CD14-positive monocyte (primary cell): ENCODE measurements at regions of chr10 and their contacts with region 1.

Region 1: DNA sequence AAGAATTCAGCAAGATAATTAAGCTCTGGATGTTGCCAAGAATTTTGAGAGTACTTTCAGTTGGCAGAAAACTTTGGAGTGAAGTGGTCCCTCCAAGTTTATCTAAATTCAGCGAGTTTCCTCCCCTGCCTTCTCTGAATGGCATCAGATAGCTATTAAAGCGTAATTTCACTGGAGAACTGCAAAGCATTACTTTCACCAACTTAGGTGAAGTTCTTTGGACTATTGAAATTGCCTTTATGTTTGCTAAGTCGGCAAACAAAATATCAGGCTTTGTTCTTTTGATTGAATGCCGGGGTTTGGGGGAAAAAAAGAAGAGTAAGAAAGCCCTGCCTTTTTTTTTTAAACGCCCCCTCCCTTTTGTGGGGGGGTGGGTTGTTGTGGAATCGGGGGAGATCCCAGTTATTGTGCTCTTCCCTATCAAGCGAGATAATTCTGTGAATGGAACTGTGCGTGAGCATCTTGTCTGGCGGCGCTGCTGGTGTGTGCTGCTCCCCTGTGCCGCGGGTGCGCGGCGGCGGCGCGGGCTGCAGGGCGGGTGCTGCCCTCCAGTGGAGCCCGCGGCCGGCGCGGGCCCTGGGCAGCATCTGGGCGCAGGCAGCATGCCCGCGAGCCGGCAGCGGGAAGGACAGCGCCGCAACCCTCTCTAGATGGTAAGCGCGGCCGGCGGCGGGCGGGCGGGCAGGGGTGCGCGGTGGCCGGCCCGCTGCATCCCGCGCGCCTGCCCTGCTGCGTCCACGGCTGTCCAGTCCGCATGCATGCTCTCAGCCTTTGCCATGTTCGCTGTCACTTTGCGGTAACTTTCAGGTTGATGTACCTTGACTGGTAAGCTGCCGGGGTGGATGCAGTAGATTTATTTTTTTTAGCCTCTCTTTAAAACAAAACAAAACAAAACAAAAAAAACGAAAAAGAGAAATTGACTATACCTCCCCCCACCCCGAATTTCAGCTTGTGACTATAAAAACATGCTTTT is 176.5 kb downstream of the TCF7L2 start:
- DNase-seq: peak; percentile 49 to 74 (median 60)
- H3K4me3 ChIP-seq: peak overlapping the region in 1 of 3 experiments; percentile 31
- H3K4me3 Mint-ChIP-seq: peak overlapping the region; percentile 45 to 83
- H3K27ac ChIP-seq: no peak overlapping the region
- H3K27ac Mint-ChIP-seq: peak overlapping the region in 2 of 7 donors; percentile 6 to 55
- H3K4me1 ChIP-seq: peaks cover 5 to 20% of the 10 kb centered on the region in 2 donors
- H3K4me1 Mint-ChIP-seq: peaks cover 17% of the 10 kb centered on the region
- H3K27me3 ChIP-seq: peaks cover 17 to 20% of the 10 kb centered on the region in 2 donors
- H3K27me3 Mint-ChIP-seq: peaks cover 17 to 50% (median 44%) of the 10 kb centered on the region in 3 donors
- CTCF ChIP-seq: peak; percentile 84

Region 2: GRCh38 chr10:112565434-112566053 is 561.0 kb before region 1 on chr10:
- intact Hi-C with region 1: loop called in 1 of 2 experiments (anchors 10 kb)
- DNase-seq: peak; percentile 17 to 35 (median 32)
- H3K4me3 ChIP-seq: no peak overlapping the region
- H3K4me3 Mint-ChIP-seq: no peak overlapping the region
- H3K27ac ChIP-seq: no peak overlapping the region
- H3K27ac Mint-ChIP-seq: no peak overlapping the region
- H3K4me1 ChIP-seq: no peaks in the 10 kb centered on the region
- H3K4me1 Mint-ChIP-seq: no peaks in the 10 kb centered on the region
- H3K27me3 ChIP-seq: no peaks in the 10 kb centered on the region
- H3K27me3 Mint-ChIP-seq: peaks cover 0 to 2% (median 0%) of the 10 kb centered on the region in 3 donors
- CTCF ChIP-seq: peak; percentile 74

Region 3: DNA sequence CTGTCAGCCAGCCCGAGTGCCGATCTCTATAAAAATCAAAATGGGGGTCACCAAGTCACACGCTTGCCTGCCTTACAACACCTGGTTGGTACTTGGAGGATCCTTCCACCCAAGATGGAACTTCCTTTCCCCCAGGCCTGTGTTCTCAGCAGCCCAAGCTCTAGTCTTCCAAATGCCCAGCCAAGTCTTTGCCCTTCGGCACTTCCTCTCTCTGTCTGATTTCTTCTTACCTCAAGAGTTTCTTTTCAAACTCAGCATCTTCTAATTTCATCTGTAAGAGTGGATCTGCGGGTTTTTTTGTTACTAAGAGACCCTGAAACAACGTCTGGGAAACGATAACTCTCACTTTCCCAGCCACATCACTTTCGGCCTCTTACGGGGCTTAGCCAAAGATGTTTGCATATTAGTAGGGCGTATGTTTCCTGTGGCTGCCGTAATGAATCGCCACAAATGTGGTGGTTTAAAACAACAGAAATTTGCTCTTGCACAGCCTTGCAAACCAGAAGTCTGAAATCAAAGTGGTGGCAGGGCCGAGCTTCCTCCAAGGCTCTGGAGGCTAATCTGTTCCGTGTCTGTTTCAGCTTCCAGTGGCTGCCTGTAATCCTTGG is 43.4 kb after region 1 on chr10:
- intact Hi-C with region 1: no loop called
- DNase-seq: peak; percentile 35 to 43 (median 36)
- H3K4me3 ChIP-seq: peak overlapping the region in 1 of 3 experiments; percentile 37
- H3K4me3 Mint-ChIP-seq: peak overlapping the region; percentile 2 to 54
- H3K27ac ChIP-seq: peak overlapping the region; percentile 54 to 73
- H3K27ac Mint-ChIP-seq: peak overlapping the region; percentile 76 to 88 (median 82)
- H3K4me1 ChIP-seq: peaks cover 25 to 33% of the 10 kb centered on the region in 2 donors
- H3K4me1 Mint-ChIP-seq: peaks cover 30% of the 10 kb centered on the region
- H3K27me3 ChIP-seq: no peaks in the 10 kb centered on the region
- H3K27me3 Mint-ChIP-seq: peaks cover 0 to 3% (median 1%) of the 10 kb centered on the region in 3 donors
- CTCF ChIP-seq: no peak

Region 4: DNA sequence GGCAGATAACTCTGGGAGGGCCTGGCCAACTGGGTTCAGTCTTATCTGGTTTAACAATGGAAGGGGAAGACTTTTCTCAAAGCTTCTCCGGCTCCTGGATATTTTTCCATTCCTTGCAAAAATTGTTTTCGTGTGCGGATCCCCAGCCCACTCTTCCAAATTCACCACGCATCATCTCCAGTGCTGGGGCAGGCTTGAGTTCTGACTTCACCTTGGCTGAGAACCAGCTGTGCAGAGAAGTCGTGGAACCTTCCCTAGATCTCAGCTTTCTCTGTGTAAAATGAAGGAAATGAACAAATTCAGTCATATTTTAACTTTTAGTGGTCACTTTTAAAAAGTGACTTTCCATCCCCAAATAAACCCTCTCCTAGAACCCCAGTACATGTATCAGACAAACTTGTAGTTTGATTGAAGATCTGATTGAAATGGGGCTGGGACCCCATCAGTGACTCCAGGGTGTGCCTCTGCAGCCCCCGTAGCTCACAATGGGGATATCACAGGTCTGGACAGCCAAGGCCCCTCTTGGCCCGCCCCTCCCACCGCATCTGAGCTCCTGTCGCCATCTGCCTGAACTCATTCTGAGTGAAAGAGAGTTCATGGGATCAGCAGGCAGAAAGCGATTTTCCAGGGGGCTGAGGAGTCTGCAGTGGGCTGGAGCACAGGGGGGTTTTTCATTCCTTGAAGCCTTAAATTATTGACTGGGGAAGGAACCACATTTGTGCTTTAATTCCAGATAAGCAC is 120.7 kb after region 1 on chr10:
- intact Hi-C with region 1: no loop called
- DNase-seq: no peak
- H3K4me3 ChIP-seq: no peak overlapping the region
- H3K4me3 Mint-ChIP-seq: no peak overlapping the region
- H3K27ac ChIP-seq: no peak overlapping the region
- H3K27ac Mint-ChIP-seq: peak overlapping the region in 1 of 7 donors; percentile 50
- H3K4me1 ChIP-seq: no peaks in the 10 kb centered on the region
- H3K4me1 Mint-ChIP-seq: peaks cover 8% of the 10 kb centered on the region
- H3K27me3 ChIP-seq: no peaks in the 10 kb centered on the region
- H3K27me3 Mint-ChIP-seq: peaks cover 0 to 2% (median 1%) of the 10 kb centered on the region in 3 donors
- CTCF ChIP-seq: no peak